ENCODE measurements at regions of chr6 and their contacts with region 1.

Region 1: GRCh38 chr6:57316581-57317059 is 810 bp upstream of the PRIM2 start:
- DNase-seq: peak; percentile 84 to 85
- H3K4me3 ChIP-seq: peak overlapping the region; percentile 71
- H3K4me3 Mint-ChIP-seq: peak overlapping the region; percentile 92
- H3K27ac Mint-ChIP-seq: peak overlapping the region; percentile 92
- H3K4me1 ChIP-seq: peaks cover 14% of the 10 kb centered on the region; the same call in 1 of the 2 replicates
- H3K4me1 Mint-ChIP-seq: peaks cover 24% of the 10 kb centered on the region
- H3K27me3 ChIP-seq: no peaks in the 10 kb centered on the region
- H3K27me3 Mint-ChIP-seq: no peaks in the 10 kb centered on the region
- CTCF ChIP-seq: peak; percentile 82 to 84

Region 2: GRCh38 chr6:56713254-56713672 is 603.4 kb before region 1 on chr6:
- CTCF ChIA-PET with region 1: no interaction called
- POLR2A ChIA-PET with region 1: no interaction called
- intact Hi-C with region 1: no loop called
- DNase-seq: peak in 1 of 2 experiments; percentile 41
- H3K4me3 ChIP-seq: no peak overlapping the region
- H3K4me3 Mint-ChIP-seq: no peak overlapping the region
- H3K27ac Mint-ChIP-seq: peak overlapping the region; percentile 78
- H3K4me1 ChIP-seq: peaks cover 51% of the 10 kb centered on the region
- H3K4me1 Mint-ChIP-seq: peaks cover 32% of the 10 kb centered on the region
- H3K27me3 ChIP-seq: no peaks in the 10 kb centered on the region
- H3K27me3 Mint-ChIP-seq: no peaks in the 10 kb centered on the region
- CTCF ChIP-seq: no peak

Region 3: GRCh38 chr6:56902641-56903464 is 413.8 kb before region 1 on chr6:
- CTCF ChIA-PET with region 1: interaction called, 9 read pairs
- POLR2A ChIA-PET with region 1: no interaction called
- intact Hi-C with region 1: loop called (anchors 1 kb)
- DNase-seq: peak in 1 of 2 experiments; percentile 13
- H3K4me3 ChIP-seq: no peak overlapping the region
- H3K4me3 Mint-ChIP-seq: peak overlapping the region; percentile 0
- H3K27ac Mint-ChIP-seq: no peak overlapping the region
- H3K4me1 ChIP-seq: 0 out of 2 replicates have a peak, but pooled peaks cover 6% of the 10 kb centered on the region
- H3K4me1 Mint-ChIP-seq: peaks cover 22% of the 10 kb centered on the region
- H3K27me3 ChIP-seq: no peaks in the 10 kb centered on the region
- H3K27me3 Mint-ChIP-seq: peaks cover 2% of the 10 kb centered on the region
- CTCF ChIP-seq: peak; percentile 67

Region 4: DNA sequence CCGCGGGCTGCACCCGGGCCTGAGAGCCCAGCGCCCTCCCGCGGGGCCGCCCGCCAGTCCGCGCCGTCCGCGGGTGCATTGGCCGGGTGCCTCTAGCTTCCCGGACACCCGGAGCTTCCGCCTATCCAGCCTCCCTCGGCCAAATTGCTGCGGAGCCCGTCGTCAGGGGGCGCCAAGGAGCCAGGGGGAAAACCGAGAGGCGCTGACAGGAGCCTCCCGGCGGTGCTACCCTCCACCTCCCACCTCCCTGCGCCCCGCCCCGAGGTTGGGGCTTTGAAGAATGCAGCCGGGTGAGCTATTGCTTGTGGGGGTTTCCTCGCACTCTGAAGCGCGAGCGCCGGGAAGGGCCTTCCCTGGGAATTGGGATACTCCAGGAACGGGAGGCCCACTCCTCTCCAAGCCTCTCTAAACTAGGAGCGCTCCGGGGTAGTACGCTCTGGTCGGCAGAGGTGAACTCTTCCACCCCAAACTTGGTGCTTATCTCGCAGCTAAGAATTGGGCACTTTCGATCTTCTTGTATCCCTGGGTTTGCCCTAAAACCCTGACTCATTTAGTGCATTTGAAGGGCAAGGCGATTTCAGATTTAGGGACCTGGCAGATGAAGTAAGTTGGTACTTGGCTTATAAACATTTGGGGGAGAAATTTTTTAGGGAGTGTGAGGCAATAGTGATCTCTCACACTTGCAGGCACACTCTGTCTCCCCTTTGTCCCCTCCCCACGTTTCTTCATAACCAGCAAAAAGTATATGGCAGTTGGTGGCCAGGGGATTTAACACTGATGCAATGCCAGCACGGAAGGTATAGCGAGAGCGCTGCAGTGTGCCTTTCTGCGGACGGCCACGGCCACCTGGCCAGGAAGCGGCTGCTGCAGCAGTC is 361.2 kb before region 1 on chr6:
- CTCF ChIA-PET with region 1: no interaction called
- POLR2A ChIA-PET with region 1: no interaction called
- intact Hi-C with region 1: loop called (anchors 2 kb)
- DNase-seq: peak; percentile 81 to 92
- H3K4me3 ChIP-seq: peak overlapping the region; percentile 56
- H3K4me3 Mint-ChIP-seq: peak overlapping the region; percentile 61
- H3K27ac Mint-ChIP-seq: no peak overlapping the region
- H3K4me1 ChIP-seq: peaks cover 2% of the 10 kb centered on the region; the same call in 1 of the 2 replicates
- H3K4me1 Mint-ChIP-seq: no peaks in the 10 kb centered on the region
- H3K27me3 ChIP-seq: peaks cover 3% of the 10 kb centered on the region; the same call in 1 of the 2 replicates
- H3K27me3 Mint-ChIP-seq: peaks cover 15% of the 10 kb centered on the region
- CTCF ChIP-seq: peak; percentile 81 to 85

Region 5: GRCh38 chr6:57006131-57006737 is 310.4 kb before region 1 on chr6:
- CTCF ChIA-PET with region 1: no interaction called
- POLR2A ChIA-PET with region 1: no interaction called
- intact Hi-C with region 1: loop called (anchors 5 kb)
- DNase-seq: peak in 1 of 2 experiments; percentile 14
- H3K4me3 ChIP-seq: no peak overlapping the region
- H3K4me3 Mint-ChIP-seq: no peak overlapping the region
- H3K27ac Mint-ChIP-seq: no peak overlapping the region
- H3K4me1 ChIP-seq: no peaks in the 10 kb centered on the region
- H3K4me1 Mint-ChIP-seq: no peaks in the 10 kb centered on the region
- H3K27me3 ChIP-seq: no peaks in the 10 kb centered on the region
- H3K27me3 Mint-ChIP-seq: no peaks in the 10 kb centered on the region
- CTCF ChIP-seq: no peak

Region 6: GRCh38 chr6:57190140-57190539 is 126.5 kb before region 1 on chr6:
- CTCF ChIA-PET with region 1: interaction called, 10 read pairs
- POLR2A ChIA-PET with region 1: no interaction called
- intact Hi-C with region 1: loop called (anchors 1 kb)
- DNase-seq: peak in 1 of 2 experiments; percentile 29
- H3K4me3 ChIP-seq: no peak overlapping the region
- H3K4me3 Mint-ChIP-seq: no peak overlapping the region
- H3K27ac Mint-ChIP-seq: no peak overlapping the region
- H3K4me1 ChIP-seq: no peaks in the 10 kb centered on the region
- H3K4me1 Mint-ChIP-seq: no peaks in the 10 kb centered on the region
- H3K27me3 ChIP-seq: no peaks in the 10 kb centered on the region
- H3K27me3 Mint-ChIP-seq: no peaks in the 10 kb centered on the region
- CTCF ChIP-seq: peak; percentile 31 to 58

Region 7: DNA sequence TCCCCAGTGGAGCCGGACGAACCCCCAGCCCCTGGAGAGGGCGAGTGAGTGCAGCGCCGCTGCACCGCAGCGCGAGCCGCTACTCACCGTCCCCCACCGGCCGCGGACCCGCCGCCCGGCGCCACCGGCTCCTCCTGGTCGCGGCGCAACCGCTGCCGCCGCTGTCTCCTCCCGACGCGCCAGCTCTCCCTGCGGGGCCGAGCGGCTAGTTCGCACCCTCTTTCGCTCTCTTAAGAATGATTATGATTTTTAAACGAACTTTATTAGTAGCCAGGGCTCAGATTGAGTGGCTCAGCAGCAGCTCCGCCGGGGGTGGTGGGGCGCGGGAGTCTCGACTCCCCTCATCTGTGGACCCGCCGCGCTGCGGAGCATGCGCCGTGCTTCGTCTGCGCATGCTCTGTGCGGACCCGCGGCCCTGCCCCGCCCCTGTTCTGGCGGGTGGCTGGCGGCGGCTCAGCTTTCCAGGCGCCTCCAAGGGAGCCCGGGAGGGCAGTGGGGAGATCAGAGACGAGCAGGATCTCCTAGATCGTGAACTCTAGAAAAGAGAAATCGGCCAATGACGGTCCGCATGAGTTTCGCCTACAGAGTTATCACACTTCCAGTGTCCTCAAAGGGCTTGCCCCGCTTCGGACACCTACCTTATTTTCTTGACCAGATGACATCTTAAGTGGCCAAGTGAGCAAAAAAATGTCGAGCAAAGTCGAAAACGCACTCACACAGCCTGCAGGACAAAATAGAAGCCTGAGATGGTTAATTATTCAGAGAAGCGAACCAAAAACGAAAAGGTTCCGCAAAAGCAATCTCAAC is 94.5 kb before region 1 on chr6 and contains the start of gene RAB23:
- CTCF ChIA-PET with region 1: interaction called, 8 read pairs
- POLR2A ChIA-PET with region 1: no interaction called
- intact Hi-C with region 1: loop called (anchors 1 kb)
- DNase-seq: peak; percentile 81 to 93
- H3K4me3 ChIP-seq: peak within 1 kb of the TSS; percentile 78
- H3K4me3 Mint-ChIP-seq: peak within 1 kb of the TSS; percentile 94
- H3K27ac Mint-ChIP-seq: peak within 1 kb of the TSS; percentile 90
- H3K4me1 ChIP-seq: peaks cover 4% of the 10 kb centered on the region; the same call in 1 of the 2 replicates
- H3K4me1 Mint-ChIP-seq: peaks cover 10% of the 10 kb centered on the region
- H3K27me3 ChIP-seq: no peaks in the 10 kb centered on the region
- H3K27me3 Mint-ChIP-seq: no peaks in the 10 kb centered on the region
- CTCF ChIP-seq: no peak
- total RNA-seq, gene RAB23: 12.6 and 13.7 TPM in 2 replicates

Region 8: GRCh38 chr6:57267586-57268293 is 48.9 kb before region 1 on chr6:
- CTCF ChIA-PET with region 1: interaction called, 4 read pairs
- POLR2A ChIA-PET with region 1: no interaction called
- intact Hi-C with region 1: loop called (anchors 1 kb)
- DNase-seq: peak; percentile 42 to 66
- H3K4me3 ChIP-seq: no peak overlapping the region
- H3K4me3 Mint-ChIP-seq: no peak overlapping the region
- H3K27ac Mint-ChIP-seq: no peak overlapping the region
- H3K4me1 ChIP-seq: no peaks in the 10 kb centered on the region
- H3K4me1 Mint-ChIP-seq: no peaks in the 10 kb centered on the region
- H3K27me3 ChIP-seq: no peaks in the 10 kb centered on the region
- H3K27me3 Mint-ChIP-seq: peaks cover 2% of the 10 kb centered on the region
- CTCF ChIP-seq: peak; percentile 61 to 64